Heart right ventricle (tissue), 16 donors: ENCODE measurements at regions of chr4 and their contacts with region 1.

Region 1: GRCh38 chr4:94406668-94407437 is 44.9 kb upstream of the PDLIM5 start:
- DNase-seq: peak; percentile 21 to 83
- ATAC-seq: peak; percentile 36 to 68 (median 57)
- H3K4me3 ChIP-seq: no peak overlapping the region
- H3K27ac ChIP-seq: peak overlapping the region; percentile 61 to 92 (median 85)
- H3K4me1 ChIP-seq: peaks cover 4 to 55% (median 22%) of the 10 kb centered on the region in 9 donors
- H3K27me3 ChIP-seq: no peaks in the 10 kb centered on the region
- CTCF ChIP-seq: peak; percentile 77 to 97 (median 93)

Region 2: GRCh38 chr4:94457692-94458106 is 50.8 kb after region 1 on chr4:
- intact Hi-C with region 1: loop called in 6 of 10 experiments (anchors 2 to 10 kb)
- DNase-seq: peak in 1 of 2 donors; percentile 63
- ATAC-seq: peak; percentile 72 to 92 (median 86)
- H3K4me3 ChIP-seq: peak overlapping the region in 7 of 10 donors; percentile 91 to 99 (median 96)
- H3K27ac ChIP-seq: peak overlapping the region; percentile 41 to 100 (median 99)
- H3K4me1 ChIP-seq: peaks cover 0 to 96% (median 45%) of the 10 kb centered on the region in 9 donors
- H3K27me3 ChIP-seq: no peaks in the 10 kb centered on the region
- CTCF ChIP-seq: no peak

Region 3: GRCh38 chr4:94507708-94508107 is 100.9 kb after region 1 on chr4:
- intact Hi-C with region 1: loop called in 1 of 10 experiments (anchors 10 kb)
- DNase-seq: no peak
- ATAC-seq: peak; percentile 62 to 89 (median 72)
- H3K4me3 ChIP-seq: no peak overlapping the region
- H3K27ac ChIP-seq: peak overlapping the region in 9 of 10 donors; percentile 23 to 65 (median 52)
- H3K4me1 ChIP-seq: peaks cover 8 to 94% (median 68%) of the 10 kb centered on the region in 9 donors
- H3K27me3 ChIP-seq: no peaks in the 10 kb centered on the region
- CTCF ChIP-seq: no peak

Region 4: DNA sequence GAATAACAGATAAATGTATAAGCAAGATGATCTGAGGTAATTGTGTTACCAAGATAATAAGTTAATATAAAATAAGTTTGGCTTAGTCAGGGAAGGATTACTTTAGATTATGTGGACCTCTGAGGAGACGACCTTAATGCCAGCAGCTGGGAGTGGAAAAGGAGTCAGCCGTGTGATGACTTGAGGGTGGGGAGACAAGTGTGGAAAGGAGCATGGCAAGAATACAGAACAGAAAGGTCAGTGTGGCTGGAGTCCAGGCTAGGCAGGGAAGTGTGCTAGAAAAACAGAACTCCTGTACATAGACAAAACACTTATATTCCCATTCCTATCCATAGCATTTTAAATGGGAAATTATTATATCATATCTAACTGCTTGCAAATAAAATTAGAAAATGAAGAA is 183.6 kb after region 1 on chr4:
- intact Hi-C with region 1: loop called in 5 of 10 experiments (anchors 2 to 10 kb)
- DNase-seq: no peak
- ATAC-seq: peak; percentile 46 to 81 (median 54)
- H3K4me3 ChIP-seq: no peak overlapping the region
- H3K27ac ChIP-seq: peak overlapping the region in 3 of 10 donors; percentile 4 to 21 (median 14)
- H3K4me1 ChIP-seq: peaks cover 3 to 47% (median 28%) of the 10 kb centered on the region in 9 donors
- H3K27me3 ChIP-seq: no peaks in the 10 kb centered on the region
- CTCF ChIP-seq: no peak

Region 5: GRCh38 chr4:94595879-94596483 is 189.1 kb after region 1 on chr4:
- intact Hi-C with region 1: loop called (anchors 1 to 10 kb)
- DNase-seq: no peak
- ATAC-seq: peak in 3 of 8 donors; percentile 41 to 57 (median 42)
- H3K4me3 ChIP-seq: no peak overlapping the region
- H3K27ac ChIP-seq: peak overlapping the region in 1 of 10 donors; percentile 30
- H3K4me1 ChIP-seq: peaks cover 0 to 34% (median 19%) of the 10 kb centered on the region in 9 donors
- H3K27me3 ChIP-seq: no peaks in the 10 kb centered on the region
- CTCF ChIP-seq: peak; percentile 40 to 81 (median 64)

Region 6: DNA sequence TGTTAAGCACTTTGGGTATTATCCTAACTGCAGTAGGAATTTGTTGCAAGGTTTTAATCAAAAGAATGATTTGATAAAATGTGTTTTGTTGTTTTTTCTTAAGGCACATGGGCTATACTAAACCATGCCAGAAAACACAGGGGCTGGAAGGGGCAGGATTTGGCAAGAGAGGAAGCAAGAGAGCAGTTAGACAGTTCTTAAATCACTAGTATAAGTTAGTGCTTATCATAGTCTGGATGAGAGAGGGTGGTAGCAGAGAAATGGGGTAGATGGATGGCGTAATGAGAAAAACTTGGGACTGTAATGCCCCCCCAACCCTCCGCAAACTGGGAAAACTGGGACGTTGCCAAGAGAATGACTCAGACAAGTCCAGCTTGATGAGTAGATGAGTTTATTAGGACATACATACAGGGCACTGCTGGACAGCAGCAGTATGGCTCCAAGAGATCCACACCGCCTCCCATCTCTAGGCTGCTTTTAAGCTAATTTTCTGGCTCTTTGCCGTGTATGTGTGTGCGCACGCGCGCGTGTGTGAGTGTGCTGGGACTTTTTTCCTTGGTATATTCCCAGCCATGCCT is 196.4 kb after region 1 on chr4:
- intact Hi-C with region 1: loop called in 3 of 10 experiments (anchors 2 to 10 kb)
- DNase-seq: peak in 1 of 2 donors; percentile 52
- ATAC-seq: peak; percentile 6 to 76 (median 53)
- H3K4me3 ChIP-seq: no peak overlapping the region
- H3K27ac ChIP-seq: peak overlapping the region in 6 of 10 donors; percentile 18 to 55 (median 36)
- H3K4me1 ChIP-seq: peaks cover 0 to 41% (median 21%) of the 10 kb centered on the region in 9 donors
- H3K27me3 ChIP-seq: no peaks in the 10 kb centered on the region
- CTCF ChIP-seq: no peak